HEK293 (cell line): ENCODE measurements at regions of chr14 and their contacts with region 1.

Region 1: GRCh38 chr14:25132732-25133422 is 82.9 kb upstream of the STXBP6 start:
- H3K4me3 ChIP-seq: no peak overlapping the region; the same call in 1 of the 2 replicates
- H3K27ac ChIP-seq: no peak overlapping the region
- H3K4me1 ChIP-seq: no peaks in the 10 kb centered on the region
- CTCF ChIP-seq: peak; percentile 63

Region 2: GRCh38 chr14:25086821-25087396 is 46.0 kb before region 1 on chr14:
- CTCF ChIA-PET with region 1: interaction called, 10 read pairs
- POLR2A ChIA-PET with region 1: no interaction called
- H3K4me3 ChIP-seq: no peak overlapping the region
- H3K27ac ChIP-seq: no peak overlapping the region
- H3K4me1 ChIP-seq: no peaks in the 10 kb centered on the region
- CTCF ChIP-seq: no peak

Region 3: GRCh38 chr14:25121337-25122122 is 11.3 kb before region 1 on chr14:
- CTCF ChIA-PET with region 1: interaction called, 12 read pairs
- POLR2A ChIA-PET with region 1: no interaction called
- H3K4me3 ChIP-seq: no peak overlapping the region
- H3K27ac ChIP-seq: no peak overlapping the region
- H3K4me1 ChIP-seq: no peaks in the 10 kb centered on the region
- CTCF ChIP-seq: no peak

Region 4: DNA sequence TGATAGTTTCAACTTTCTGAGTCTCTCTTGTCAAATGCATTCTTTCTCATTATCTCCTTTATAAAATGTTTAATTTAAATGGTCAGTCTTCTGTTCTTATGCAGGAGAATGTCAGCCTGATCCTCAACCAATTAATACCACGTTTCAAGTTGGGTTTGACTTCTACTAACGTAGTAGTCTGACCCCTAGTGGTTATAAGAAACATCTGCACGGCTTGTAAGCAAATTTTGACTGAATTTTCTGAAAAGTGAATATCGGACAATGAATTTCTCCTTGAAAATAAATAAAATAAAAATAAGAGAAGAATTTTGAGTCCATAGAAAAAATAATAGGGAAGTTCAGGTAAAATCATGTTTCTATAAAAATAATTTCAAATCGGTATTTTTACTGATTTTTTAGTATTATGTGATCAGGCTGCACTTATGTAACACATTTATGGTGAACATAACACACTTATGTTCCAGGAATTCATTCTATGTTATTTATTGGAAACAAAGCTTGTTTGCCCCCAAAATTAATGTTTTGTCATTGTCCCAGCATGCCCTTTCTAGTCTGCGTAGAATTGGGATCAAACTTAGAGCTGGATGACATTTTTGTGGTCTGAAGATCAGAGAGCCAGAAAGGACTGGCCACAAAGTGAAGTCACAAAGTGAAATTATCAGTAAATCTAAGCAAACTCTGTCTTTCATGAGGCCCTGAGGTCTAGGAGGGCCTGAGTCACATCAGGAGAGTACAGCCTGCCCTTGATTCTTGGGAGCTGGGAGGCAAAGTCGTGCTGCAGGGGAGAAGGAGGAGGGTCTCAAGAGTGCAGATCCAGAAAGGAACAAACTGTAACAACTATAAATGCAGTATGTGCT is 18.3 kb after region 1 on chr14:
- CTCF ChIA-PET with region 1: interaction called, 22 read pairs
- POLR2A ChIA-PET with region 1: no interaction called
- H3K4me3 ChIP-seq: no peak overlapping the region
- H3K27ac ChIP-seq: no peak overlapping the region
- H3K4me1 ChIP-seq: no peaks in the 10 kb centered on the region
- CTCF ChIP-seq: no peak

Region 5: GRCh38 chr14:25178255-25178654 is 45.4 kb after region 1 on chr14:
- CTCF ChIA-PET with region 1: no interaction called
- POLR2A ChIA-PET with region 1: no interaction called
- H3K4me3 ChIP-seq: no peak overlapping the region
- H3K27ac ChIP-seq: no peak overlapping the region
- H3K4me1 ChIP-seq: no peaks in the 10 kb centered on the region
- CTCF ChIP-seq: no peak